Calu3 (cell line): ENCODE measurements at regions of chr2 and their contacts with region 1.

Region 1: GRCh38 chr2:161946489-161947107 is 127.4 kb downstream of the DPP4 start:
- DNase-seq: peak; percentile 34
- H3K4me3 Mint-ChIP-seq: no peak overlapping the region
- H3K27ac Mint-ChIP-seq: no peak overlapping the region
- H3K4me1 Mint-ChIP-seq: no peaks in the 10 kb centered on the region
- H3K27me3 Mint-ChIP-seq: no peaks in the 10 kb centered on the region
- CTCF ChIP-seq: peak; percentile 44

Region 2: DNA sequence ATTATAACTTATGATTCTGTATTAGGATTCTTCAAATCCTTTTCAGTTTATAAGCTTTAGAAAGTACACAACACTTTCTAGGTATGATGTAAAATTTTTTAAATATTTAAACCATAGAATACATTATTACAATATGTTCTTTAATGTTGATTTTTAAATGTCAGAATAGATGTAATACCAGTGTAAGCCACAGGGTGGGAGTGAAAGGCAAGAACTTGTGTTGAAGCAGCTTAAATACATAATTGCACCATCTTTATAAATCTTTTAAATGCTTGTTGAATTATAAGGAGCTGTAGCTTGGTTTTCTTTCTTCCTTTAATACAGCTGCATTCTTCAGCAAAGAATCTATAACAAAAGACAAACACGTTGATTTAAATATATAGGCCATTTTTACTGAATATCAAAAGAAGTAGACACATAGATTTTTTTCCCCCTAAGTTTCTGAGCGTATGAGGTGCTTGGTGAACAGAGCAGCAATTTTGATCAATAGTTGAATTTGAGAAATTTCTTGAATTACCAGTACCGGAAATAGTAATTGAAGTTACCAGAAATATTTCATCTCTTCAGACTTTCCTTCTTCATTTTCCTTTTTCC is 723.4 kb before region 1 on chr2:
- CTCF ChIA-PET with region 1: no interaction called
- intact Hi-C with region 1: loop called (anchors 10 kb)
- DNase-seq: peak; percentile 12
- H3K4me3 Mint-ChIP-seq: no peak overlapping the region
- H3K27ac Mint-ChIP-seq: no peak overlapping the region
- H3K4me1 Mint-ChIP-seq: no peaks in the 10 kb centered on the region
- H3K27me3 Mint-ChIP-seq: no peaks in the 10 kb centered on the region
- CTCF ChIP-seq: peak; percentile 40

Region 3: GRCh38 chr2:161586517-161587167 is 360.0 kb before region 1 on chr2:
- CTCF ChIA-PET with region 1: interaction called, 6 read pairs
- intact Hi-C with region 1: loop called (anchors 1 kb)
- DNase-seq: no peak
- H3K4me3 Mint-ChIP-seq: no peak overlapping the region
- H3K27ac Mint-ChIP-seq: no peak overlapping the region
- H3K4me1 Mint-ChIP-seq: no peaks in the 10 kb centered on the region
- H3K27me3 Mint-ChIP-seq: no peaks in the 10 kb centered on the region
- CTCF ChIP-seq: peak; percentile 34

Region 4: DNA sequence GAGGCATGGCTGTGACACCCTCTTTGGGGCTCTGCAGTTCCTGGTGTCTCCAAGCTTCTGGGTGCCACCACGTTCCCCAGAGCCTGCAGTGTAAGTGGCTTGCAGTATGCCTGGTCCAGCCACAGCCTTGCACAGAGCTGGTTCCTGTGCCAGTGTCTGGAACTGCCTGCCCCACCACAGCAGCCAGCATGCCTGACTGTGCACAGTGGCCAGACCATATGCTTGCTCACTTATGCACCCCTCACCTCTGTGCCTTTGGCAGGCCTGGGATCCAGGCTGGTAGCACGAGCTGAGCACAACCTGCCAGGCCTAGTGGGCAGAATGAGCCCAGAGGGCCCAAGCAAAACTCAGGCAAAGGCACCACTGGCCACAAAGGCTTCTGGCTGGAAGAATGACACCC is 26.7 kb before region 1 on chr2:
- CTCF ChIA-PET with region 1: no interaction called
- intact Hi-C with region 1: no loop called
- DNase-seq: no peak
- H3K4me3 Mint-ChIP-seq: no peak overlapping the region
- H3K27ac Mint-ChIP-seq: no peak overlapping the region
- H3K4me1 Mint-ChIP-seq: peaks cover 8% of the 10 kb centered on the region
- H3K27me3 Mint-ChIP-seq: no peaks in the 10 kb centered on the region
- CTCF ChIP-seq: no peak

Region 5: GRCh38 chr2:162123806-162124758 is 177.5 kb after region 1 on chr2:
- CTCF ChIA-PET with region 1: no interaction called
- intact Hi-C with region 1: loop called (anchors 2 kb)
- DNase-seq: peak; percentile 13
- H3K4me3 Mint-ChIP-seq: no peak overlapping the region
- H3K27ac Mint-ChIP-seq: no peak overlapping the region
- H3K4me1 Mint-ChIP-seq: no peaks in the 10 kb centered on the region
- H3K27me3 Mint-ChIP-seq: peaks cover 14% of the 10 kb centered on the region
- CTCF ChIP-seq: no peak